Posterior cingulate gyrus (tissue), 11 donors: ENCODE measurements at regions of chr12 and their contacts with region 1.

Region 1: GRCh38 chr12:2004113-2004929 is at the start of gene DCP1B:
- DNase-seq: peak; percentile 94 to 100 (median 98)

Region 2: DNA sequence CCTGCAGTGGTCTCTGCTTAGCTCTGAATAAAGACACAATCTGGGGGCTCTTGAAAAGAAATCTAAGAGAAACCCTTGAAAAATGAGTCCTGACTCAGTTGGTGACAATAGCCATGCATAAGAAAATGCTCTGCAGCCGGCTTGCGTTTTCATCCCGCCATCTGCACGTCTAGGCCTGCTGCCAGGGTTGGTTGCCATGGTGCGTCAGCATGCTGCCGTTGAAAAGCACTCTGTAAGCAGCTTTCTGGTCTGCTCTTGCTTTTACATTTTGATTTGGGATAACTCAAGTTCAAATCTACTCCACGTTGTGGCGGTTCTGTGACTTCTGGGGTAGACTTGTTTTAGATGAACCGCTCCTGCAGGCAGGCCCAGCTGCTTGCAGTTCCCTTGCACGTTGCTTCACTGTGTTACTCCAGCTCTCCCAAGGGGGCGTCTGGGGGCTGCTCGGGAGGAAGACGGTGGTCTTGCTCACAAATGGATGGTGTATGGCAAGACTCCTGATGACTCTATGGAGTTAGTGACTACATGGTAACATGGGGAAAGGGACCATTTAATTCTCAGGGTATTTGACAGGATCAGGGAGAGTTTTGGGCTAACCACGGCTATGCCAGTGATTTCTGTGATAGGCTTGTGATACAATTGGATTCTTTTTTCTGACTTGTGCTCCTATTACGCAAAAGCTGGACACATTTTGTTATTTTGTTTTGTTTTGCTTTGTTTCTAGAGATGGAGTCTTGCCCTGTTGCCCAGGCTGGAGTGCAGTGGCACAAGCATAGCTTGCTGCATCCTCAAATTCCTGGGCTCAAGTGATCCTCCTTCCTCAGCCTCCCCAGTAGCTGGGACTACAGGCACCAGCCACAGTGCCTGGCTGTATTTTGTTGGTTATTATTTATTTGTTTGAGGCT is 359.5 kb before region 1 on chr12:
- intact Hi-C with region 1: no loop called
- DNase-seq: peak; percentile 88 to 99 (median 93)

Region 3: DNA sequence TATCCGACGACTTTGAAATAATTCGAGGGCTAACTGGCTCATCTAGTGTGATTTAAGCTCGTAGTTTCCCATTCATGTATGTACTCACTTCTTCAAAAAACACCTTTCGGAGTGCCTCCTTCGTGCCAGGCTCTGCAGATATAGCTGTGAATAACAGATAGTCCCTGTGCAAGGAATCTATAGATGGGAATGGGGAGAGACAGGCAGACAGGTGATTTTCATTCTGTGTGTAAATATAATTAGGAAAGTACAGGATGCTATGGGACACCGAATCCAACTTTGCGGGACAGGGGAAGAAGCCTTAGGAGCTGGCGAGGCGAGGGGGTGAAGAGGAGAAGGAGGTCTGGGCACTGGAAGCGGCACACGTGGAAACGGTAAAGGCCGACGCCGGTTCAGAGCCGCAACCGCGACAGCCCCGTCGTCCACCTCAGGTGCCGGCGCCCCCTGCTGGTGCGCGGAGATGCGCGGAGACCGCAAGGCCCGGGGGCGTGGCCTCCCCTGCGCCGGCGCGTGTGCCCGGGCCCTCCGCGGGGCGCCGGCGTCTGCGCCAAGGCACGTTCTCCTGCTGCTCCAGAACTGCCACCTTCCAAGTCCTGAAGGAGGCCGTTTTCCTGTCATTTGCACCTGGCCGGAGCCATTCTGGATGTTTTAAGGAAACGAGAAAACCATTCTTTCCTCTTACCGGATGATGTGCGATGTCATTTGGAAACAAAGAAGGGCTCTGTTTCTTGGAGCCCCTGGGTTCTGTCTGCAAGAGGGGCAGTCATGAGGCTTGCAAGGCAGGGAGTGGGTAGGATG is 30.5 kb after region 1 on chr12:
- intact Hi-C with region 1: loop called (anchors 5 kb)
- DNase-seq: peak; percentile 74 to 98 (median 90)